ENCODE measurements at regions of chr18 and their contacts with region 1.

Region 1: GRCh38 chr18:56575819-56576663 is 62.4 kb downstream of the TXNL1 start:
- DNase-seq: peak; percentile 40
- H3K4me3 Mint-ChIP-seq: no peak overlapping the region
- H3K27ac Mint-ChIP-seq: no peak overlapping the region
- H3K4me1 Mint-ChIP-seq: no peaks in the 10 kb centered on the region
- H3K27me3 Mint-ChIP-seq: no peaks in the 10 kb centered on the region
- CTCF ChIP-seq: peak; percentile 67

Region 2: GRCh38 chr18:56333839-56334238 is 242.2 kb before region 1 on chr18:
- CTCF ChIA-PET with region 1: no interaction called
- intact Hi-C with region 1: no loop called
- DNase-seq: no peak
- H3K4me3 Mint-ChIP-seq: no peak overlapping the region
- H3K27ac Mint-ChIP-seq: no peak overlapping the region
- H3K4me1 Mint-ChIP-seq: no peaks in the 10 kb centered on the region
- H3K27me3 Mint-ChIP-seq: peaks cover 19% of the 10 kb centered on the region
- CTCF ChIP-seq: no peak

Region 3: DNA sequence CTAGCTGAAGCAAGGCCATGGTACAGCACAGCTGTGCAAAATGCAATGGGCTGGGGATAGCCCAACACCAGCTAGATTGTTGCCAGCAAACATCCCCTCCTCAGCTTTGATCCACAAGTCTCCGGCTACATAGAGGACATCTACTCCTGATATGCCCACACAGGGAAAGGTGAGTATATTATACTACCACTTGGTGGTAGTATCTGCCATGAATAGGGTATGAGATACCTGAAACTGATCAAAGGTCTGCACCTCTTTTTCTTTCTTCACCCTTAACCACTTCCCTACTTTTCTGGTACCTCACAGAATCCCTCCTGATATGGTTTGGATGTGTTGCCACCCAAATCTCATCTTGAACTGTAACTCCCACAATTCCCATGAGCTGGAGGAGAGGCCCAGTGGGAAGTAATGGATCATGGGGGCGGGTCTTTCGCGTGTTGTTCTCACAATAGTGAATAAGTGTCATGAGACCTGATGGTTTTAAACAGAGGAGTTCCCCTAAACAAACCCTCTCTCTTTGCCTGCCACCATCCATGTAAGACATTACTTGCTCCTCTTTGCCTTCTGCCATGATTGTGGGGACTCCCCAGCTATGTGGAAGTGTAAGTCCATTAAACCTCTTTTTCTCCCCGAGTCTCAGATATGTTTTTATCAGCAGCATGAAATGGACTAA is 217.3 kb before region 1 on chr18:
- CTCF ChIA-PET with region 1: no interaction called
- intact Hi-C with region 1: loop called (anchors 1 kb)
- DNase-seq: no peak
- H3K4me3 Mint-ChIP-seq: no peak overlapping the region
- H3K27ac Mint-ChIP-seq: no peak overlapping the region
- H3K4me1 Mint-ChIP-seq: no peaks in the 10 kb centered on the region
- H3K27me3 Mint-ChIP-seq: no peaks in the 10 kb centered on the region
- CTCF ChIP-seq: peak; percentile 23